Heart right ventricle (tissue), 16 donors: ENCODE measurements at regions of chr11 and their contacts with region 1.

Region 1: DNA sequence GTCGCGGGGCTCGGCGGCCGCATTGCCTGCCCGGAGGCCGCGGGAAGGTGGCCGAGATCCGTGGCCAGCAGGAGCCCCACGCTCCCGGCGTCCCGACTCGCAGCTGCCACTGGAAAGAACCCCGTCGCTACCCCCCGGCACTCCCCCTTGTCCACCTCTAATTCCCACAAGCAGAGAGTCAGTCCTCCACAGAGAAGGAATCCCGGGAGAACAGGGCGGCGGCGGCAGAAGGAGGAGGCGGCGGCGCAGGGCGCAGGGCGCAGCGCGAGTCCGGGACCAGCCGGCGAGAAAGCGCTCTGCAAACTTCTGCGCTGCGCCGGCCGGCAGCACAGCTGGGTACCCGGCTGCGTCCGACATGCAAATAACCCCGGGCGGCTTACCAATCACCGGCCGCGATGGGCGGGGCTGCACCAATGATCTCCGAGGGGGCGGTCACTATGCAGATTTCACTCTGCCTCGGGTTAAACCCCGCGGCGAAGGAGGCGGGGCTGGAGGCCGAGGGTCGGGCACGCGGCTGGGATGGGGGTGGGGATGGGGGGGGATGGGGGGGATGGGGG is at the start of gene ABTB2:
- DNase-seq: peak; percentile 98
- ATAC-seq: peak; percentile 94 to 96 (median 96)
- H3K4me3 ChIP-seq: peak within 1 kb of the TSS; percentile 26 to 88 (median 68)
- H3K27ac ChIP-seq: peak within 1 kb of the TSS; percentile 26 to 87 (median 80)
- H3K4me1 ChIP-seq: peaks cover 9 to 46% (median 37%) of the 10 kb centered on the region in 9 donors
- H3K27me3 ChIP-seq: peaks cover 0 to 38% (median 29%) of the 10 kb centered on the region in 7 donors
- CTCF ChIP-seq: no peak
- total RNA-seq, gene ABTB2: 7.3 to 19.1 (median 15.8) TPM

Region 2: DNA sequence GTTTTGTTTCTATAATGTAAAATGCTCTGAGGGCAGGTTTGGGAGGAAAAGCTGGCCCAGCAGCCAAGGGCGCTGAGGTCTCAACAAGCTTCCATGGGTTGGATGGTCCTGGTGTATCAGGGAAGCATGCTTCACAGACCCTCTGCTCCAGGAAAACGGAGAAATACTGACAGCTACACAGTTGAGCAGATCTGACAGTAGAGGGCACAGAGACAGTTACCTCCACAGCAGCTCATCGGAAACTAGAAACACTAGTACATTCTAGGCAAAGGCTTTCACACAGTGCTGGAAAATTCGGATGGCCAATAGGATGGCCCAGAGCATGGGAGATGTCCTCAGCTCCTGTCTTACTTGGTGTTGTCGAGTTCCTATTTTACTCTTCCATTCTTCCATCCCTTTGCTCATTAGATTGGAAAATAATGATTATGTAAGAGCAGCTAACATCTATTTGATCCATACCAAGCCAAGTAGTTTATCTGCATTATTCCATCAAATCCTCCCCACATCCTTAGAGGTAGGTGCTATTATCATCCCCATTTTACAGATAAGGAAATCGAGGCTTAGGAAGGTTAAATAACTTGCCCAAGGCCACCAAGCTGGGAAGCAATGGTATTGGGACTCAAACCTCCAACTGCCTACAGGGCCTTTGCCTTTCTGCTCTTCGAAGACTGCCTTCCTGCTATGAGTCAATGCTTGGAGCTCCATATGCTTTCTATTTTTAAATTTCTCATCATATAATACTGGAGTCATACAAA is 494.2 kb before region 1 on chr11:
- intact Hi-C with region 1: loop called in 4 of 10 experiments (anchors 5 to 10 kb)
- DNase-seq: no peak
- ATAC-seq: no peak
- H3K4me3 ChIP-seq: no peak overlapping the region
- H3K27ac ChIP-seq: no peak overlapping the region
- H3K4me1 ChIP-seq: peaks cover 0 to 55% (median 7%) of the 10 kb centered on the region in 9 donors
- H3K27me3 ChIP-seq: peaks cover 0 to 11% (median 0%) of the 10 kb centered on the region in 7 donors
- CTCF ChIP-seq: no peak

Region 3: GRCh38 chr11:34051349-34052035 is 306.3 kb before region 1 on chr11 and contains the start of gene CAPRIN1:
- intact Hi-C with region 1: loop called in 1 of 10 experiments (anchors 5 kb)
- DNase-seq: peak; percentile 88 to 89
- ATAC-seq: peak; percentile 89 to 96 (median 93)
- H3K4me3 ChIP-seq: peak within 1 kb of the TSS; percentile 77 to 99 (median 94)
- H3K27ac ChIP-seq: peak within 1 kb of the TSS; percentile 97 to 100 (median 100)
- H3K4me1 ChIP-seq: peaks cover 11 to 43% (median 37%) of the 10 kb centered on the region in 9 donors
- H3K27me3 ChIP-seq: no peaks in the 10 kb centered on the region
- CTCF ChIP-seq: no peak
- total RNA-seq, gene CAPRIN1: 103 to 142 (median 120) TPM

Region 4: GRCh38 chr11:34174412-34175041 is 183.3 kb before region 1 on chr11:
- intact Hi-C with region 1: loop called (anchors 1 to 2 kb)
- DNase-seq: peak; percentile 82 to 86
- ATAC-seq: peak; percentile 96 to 99 (median 98)
- H3K4me3 ChIP-seq: peak overlapping the region in 8 of 10 donors; percentile 21 to 39 (median 34)
- H3K27ac ChIP-seq: peak overlapping the region in 2 of 10 donors; percentile 3 to 42
- H3K4me1 ChIP-seq: peaks cover 0 to 19% (median 13%) of the 10 kb centered on the region in 9 donors
- H3K27me3 ChIP-seq: peaks cover 0 to 11% (median 0%) of the 10 kb centered on the region in 7 donors
- CTCF ChIP-seq: peak; percentile 83 to 97 (median 92)

Region 5: GRCh38 chr11:34250732-34251639 is 106.8 kb before region 1 on chr11:
- intact Hi-C with region 1: loop called in 2 of 10 experiments (anchors 5 kb)
- DNase-seq: peak; percentile 56 to 70
- ATAC-seq: peak; percentile 85 to 97 (median 92)
- H3K4me3 ChIP-seq: peak overlapping the region in 6 of 10 donors; percentile 21 to 35 (median 26)
- H3K27ac ChIP-seq: peak overlapping the region in 8 of 10 donors; percentile 22 to 70 (median 52)
- H3K4me1 ChIP-seq: peaks cover 0 to 30% (median 23%) of the 10 kb centered on the region in 9 donors
- H3K27me3 ChIP-seq: no peaks in the 10 kb centered on the region
- CTCF ChIP-seq: no peak

Region 6: GRCh38 chr11:34266090-34266912 is 91.5 kb before region 1 on chr11:
- intact Hi-C with region 1: loop called in 1 of 10 experiments (anchors 10 kb)
- DNase-seq: peak in 1 of 2 donors; percentile 49
- ATAC-seq: peak; percentile 38 to 62 (median 46)
- H3K4me3 ChIP-seq: no peak overlapping the region
- H3K27ac ChIP-seq: peak overlapping the region in 7 of 10 donors; percentile 5 to 62 (median 51)
- H3K4me1 ChIP-seq: peaks cover 9 to 53% (median 32%) of the 10 kb centered on the region in 9 donors
- H3K27me3 ChIP-seq: no peaks in the 10 kb centered on the region
- CTCF ChIP-seq: no peak

Region 7: DNA sequence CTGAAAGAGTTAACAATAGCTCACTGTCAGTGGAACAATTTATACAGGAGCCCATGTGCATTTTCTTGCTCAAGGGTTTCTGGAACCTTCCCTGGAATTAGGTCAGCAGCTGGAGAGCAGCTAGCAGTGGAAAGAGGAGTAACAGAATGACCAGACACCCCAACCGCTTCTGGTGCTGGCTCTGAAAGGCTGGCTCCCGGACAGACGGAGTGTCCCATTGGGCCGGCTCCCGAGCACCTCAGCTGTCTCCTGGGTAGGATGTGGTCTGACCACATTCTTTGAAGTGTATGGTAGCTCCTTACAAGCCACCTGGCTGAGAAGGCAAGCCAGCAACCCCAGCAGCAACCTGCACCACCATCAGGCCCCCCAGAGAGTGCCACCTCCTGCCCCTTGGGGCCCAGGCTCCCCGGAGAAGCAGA is 44.7 kb before region 1 on chr11:
- intact Hi-C with region 1: loop called in 3 of 10 experiments (anchors 5 kb)
- DNase-seq: peak; percentile 20 to 26
- ATAC-seq: peak in 6 of 8 donors; percentile 10 to 34 (median 28)
- H3K4me3 ChIP-seq: no peak overlapping the region
- H3K27ac ChIP-seq: peak overlapping the region in 4 of 10 donors; percentile 3 to 26 (median 16)
- H3K4me1 ChIP-seq: peaks cover 17 to 73% (median 33%) of the 10 kb centered on the region in 9 donors
- H3K27me3 ChIP-seq: no peaks in the 10 kb centered on the region
- CTCF ChIP-seq: no peak

Region 8: DNA sequence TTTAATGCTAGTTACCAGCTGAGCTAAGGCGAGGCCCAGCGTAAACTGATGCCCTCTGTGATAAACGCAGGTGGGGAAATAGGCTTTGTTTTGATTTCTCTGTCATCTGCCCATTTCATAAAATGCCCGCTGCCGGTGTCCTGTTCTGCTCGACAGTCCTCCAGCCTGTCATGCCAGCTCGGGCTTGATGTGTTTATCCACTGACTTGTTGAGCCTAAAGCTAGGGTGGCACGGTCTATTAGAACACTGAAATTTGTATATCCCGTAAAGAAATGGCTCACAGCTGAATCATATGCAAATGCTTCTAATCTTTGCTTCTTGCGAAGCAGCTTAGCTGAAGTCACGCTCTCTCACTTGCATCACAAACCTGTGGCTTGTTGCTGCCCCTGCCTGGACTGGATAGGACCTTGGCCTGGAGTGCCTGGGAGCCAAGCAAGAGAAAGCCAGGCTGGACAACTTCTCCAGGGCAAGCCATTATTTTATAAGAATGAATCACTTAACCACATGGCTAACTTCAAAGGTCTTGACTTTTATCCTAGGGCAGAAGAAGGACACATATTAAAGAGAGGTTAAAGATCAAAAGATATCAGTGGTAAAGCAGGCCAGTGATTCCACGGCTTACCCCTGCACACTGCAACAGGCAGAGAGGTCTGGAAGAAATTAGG is 296.2 kb after region 1 on chr11:
- intact Hi-C with region 1: no loop called
- DNase-seq: no peak
- ATAC-seq: peak in 4 of 8 donors; percentile 47 to 65 (median 54)
- H3K4me3 ChIP-seq: no peak overlapping the region
- H3K27ac ChIP-seq: no peak overlapping the region
- H3K4me1 ChIP-seq: peaks cover 0 to 24% (median 0%) of the 10 kb centered on the region in 9 donors
- H3K27me3 ChIP-seq: no peaks in the 10 kb centered on the region
- CTCF ChIP-seq: peak in 1 of 9 donors; percentile 7